Gastrocnemius medialis (tissue), 4 donors: ENCODE measurements at regions of chr1 and their contacts with region 1.

Region 1: GRCh38 chr1:167936068-167936929 is at the start of gene DCAF6:
- DNase-seq: peak; percentile 96 to 98
- ATAC-seq: peak; percentile 85
- H3K4me3 ChIP-seq: peak within 1 kb of the TSS; percentile 76 to 94 (median 90)
- H3K27ac ChIP-seq: peak within 1 kb of the TSS; percentile 94 to 99 (median 98)
- H3K4me1 ChIP-seq: peaks cover 51 to 52% of the 10 kb centered on the region in 2 donors
- H3K27me3 ChIP-seq: no peaks in the 10 kb centered on the region
- CTCF ChIP-seq: no peak
- POLR2A ChIP-seq: peak; percentile 86 to 87
- total RNA-seq, gene DCAF6: 365 to 466 (median 389) TPM

Region 2: DNA sequence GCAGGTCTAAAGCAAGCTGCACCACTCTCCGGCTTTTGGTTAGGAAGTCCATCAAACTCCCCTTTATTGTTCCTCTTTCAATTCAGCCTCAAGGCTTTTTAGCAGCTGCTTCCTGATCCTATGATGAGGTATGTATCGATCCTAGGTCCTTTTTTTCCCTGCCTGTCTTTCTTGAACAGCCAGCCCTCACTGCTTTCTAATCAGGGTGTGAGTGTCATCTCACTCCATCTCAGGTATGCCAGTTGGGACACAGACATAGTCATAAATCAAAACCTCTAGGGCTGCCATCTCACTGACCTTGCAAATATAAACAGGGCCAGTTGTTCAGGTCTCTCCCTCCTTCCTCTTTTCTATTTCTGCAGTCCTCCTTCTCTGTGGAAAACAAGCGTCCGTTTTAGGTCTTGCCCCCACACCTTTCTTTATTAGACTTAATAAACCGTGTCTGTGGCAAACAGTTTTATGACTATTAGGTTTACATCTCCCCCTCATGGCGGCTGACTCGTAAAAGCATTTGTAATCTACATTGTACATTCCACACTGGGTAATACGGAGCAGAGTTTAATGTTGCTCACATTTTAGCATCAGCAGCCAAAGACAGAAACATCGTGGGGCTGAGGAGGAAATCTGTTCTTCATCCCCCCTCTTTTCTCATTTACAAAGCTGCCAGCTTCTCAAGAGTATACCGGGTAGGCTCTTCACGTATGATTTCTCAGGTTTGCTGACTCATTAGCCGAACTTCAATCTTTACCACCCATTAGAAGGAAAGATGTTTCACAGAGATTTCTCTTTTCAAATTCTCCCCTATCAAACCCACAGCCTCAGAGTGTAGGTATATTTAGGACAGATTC is 830.8 kb before region 1 on chr1:
- in situ Hi-C with region 1: no loop called
- intact Hi-C with region 1: loop called (anchors 10 kb)
- DNase-seq: peak; percentile 42 to 65
- ATAC-seq: peak; percentile 91
- H3K4me3 ChIP-seq: peak overlapping the region in 3 of 4 donors; percentile 10 to 31 (median 22)
- H3K27ac ChIP-seq: peak overlapping the region; percentile 85 to 94 (median 89)
- H3K4me1 ChIP-seq: peaks cover 71 to 72% of the 10 kb centered on the region in 2 donors
- H3K27me3 ChIP-seq: no peaks in the 10 kb centered on the region
- CTCF ChIP-seq: no peak
- POLR2A ChIP-seq: peak in 1 of 2 donors; percentile 31

Region 3: GRCh38 chr1:167553136-167554027 is 382.9 kb before region 1 on chr1 and contains the start of gene CREG1:
- in situ Hi-C with region 1: no loop called
- intact Hi-C with region 1: loop called (anchors 10 kb)
- DNase-seq: peak; percentile 90 to 94
- ATAC-seq: peak; percentile 88 to 91
- H3K4me3 ChIP-seq: peak within 1 kb of the TSS; percentile 66 to 89 (median 74)
- H3K27ac ChIP-seq: peak within 1 kb of the TSS; percentile 66 to 91 (median 82)
- H3K4me1 ChIP-seq: peaks cover 35 to 49% of the 10 kb centered on the region in 2 donors
- H3K27me3 ChIP-seq: no peaks in the 10 kb centered on the region
- CTCF ChIP-seq: peak in 1 of 5 experiments; percentile 14
- POLR2A ChIP-seq: peak; percentile 95 to 96
- total RNA-seq, gene CREG1: 69.9 to 99.6 (median 80.7) TPM

Region 4: DNA sequence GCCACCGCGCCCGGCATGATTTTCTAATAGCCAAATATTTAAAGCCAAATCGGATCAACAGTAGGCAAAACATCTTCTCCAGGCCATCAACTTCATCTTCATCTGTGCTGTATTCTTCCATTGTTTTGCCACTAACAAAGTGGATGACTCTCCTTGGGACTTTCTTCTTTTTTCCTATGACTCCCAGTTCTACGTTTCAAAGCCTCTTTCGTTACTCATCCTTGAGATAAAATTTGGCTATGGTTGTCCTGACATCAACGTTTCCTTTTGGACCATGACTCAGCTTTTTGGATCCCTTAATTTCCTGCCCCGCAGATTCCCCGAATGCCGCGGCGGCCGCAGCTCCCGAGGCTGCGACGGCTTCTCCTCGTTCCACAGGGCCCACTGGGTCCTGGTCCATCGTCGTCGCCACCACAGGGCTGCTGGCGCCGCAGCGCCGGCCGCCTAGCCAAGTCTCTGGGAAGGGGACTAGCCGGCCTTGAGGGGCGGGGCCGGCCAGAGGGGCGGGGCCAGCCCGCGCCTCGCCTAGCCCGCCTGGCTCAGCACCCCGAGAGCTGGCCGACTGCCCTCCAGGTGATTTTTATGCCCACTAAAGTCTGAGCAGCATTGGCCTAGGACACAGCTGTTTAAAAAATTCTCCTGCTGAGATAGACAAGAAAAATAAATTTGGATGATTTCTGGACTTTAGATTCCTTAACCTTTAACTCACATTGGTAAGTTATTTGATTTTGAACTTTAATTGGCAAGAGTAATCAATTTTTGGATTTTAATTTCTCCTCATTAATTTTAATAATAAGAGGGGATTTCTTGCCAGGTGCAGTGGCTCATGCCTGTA is 116.2 kb before region 1 on chr1:
- in situ Hi-C with region 1: no loop called
- intact Hi-C with region 1: loop called (anchors 5 kb)
- DNase-seq: peak; percentile 45 to 85
- ATAC-seq: peak; percentile 92 to 93
- H3K4me3 ChIP-seq: peak overlapping the region; percentile 43 to 59 (median 47)
- H3K27ac ChIP-seq: peak overlapping the region; percentile 64 to 82 (median 76)
- H3K4me1 ChIP-seq: peaks cover 0 to 9% of the 10 kb centered on the region in 2 donors
- H3K27me3 ChIP-seq: no peaks in the 10 kb centered on the region
- CTCF ChIP-seq: no peak
- POLR2A ChIP-seq: no peak

Region 5: GRCh38 chr1:167909631-167910180 is 26.6 kb before region 1 on chr1:
- in situ Hi-C with region 1: no loop called
- intact Hi-C with region 1: no loop called
- DNase-seq: no peak
- ATAC-seq: no peak
- H3K4me3 ChIP-seq: no peak overlapping the region
- H3K27ac ChIP-seq: no peak overlapping the region
- H3K4me1 ChIP-seq: peaks cover 0 to 3% of the 10 kb centered on the region in 2 donors
- H3K27me3 ChIP-seq: no peaks in the 10 kb centered on the region
- CTCF ChIP-seq: no peak
- POLR2A ChIP-seq: no peak

Region 6: DNA sequence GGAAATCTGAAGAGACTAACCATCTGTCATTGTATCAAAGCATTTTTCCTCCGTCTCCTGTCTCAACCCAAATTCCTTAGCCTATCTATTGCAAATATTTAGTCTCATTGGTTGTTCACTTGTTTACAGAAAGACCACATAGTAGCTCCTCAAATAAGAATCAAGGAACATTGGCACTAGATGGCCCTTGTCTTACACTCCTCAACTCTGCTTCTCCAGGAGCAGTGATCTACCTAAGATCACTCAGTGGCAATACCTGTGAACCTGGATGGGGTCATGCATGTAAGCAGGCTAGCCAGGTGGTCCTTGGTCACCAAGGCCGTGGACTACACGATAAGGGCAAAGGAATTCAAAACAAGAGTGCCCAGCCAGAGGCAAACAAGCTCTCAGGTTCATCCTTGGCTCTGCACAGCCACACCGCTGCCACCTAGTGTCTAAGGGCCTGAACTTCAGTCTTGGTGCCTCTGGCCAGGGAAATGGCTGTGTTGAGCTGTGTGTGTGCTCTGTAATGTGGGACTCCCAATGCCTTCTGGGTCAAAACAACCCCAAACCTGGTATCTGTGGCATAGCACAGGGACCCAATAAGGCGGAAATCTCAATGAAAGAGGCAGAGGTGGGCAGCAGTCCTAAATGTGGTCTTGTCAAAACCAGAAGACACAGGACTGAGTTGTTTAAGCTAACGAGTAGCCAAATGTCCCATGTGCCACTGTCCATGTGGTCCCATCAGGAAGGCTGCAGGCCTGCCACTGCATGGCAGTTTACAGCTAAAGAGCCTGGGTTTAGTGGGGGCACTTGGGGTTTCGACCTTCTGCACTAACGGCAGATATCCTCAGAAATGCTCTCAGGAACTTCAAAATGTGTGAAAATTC is 145.9 kb after region 1 on chr1:
- in situ Hi-C with region 1: no loop called
- intact Hi-C with region 1: loop called (anchors 2 kb)
- DNase-seq: peak; percentile 55 to 69
- ATAC-seq: peak; percentile 64 to 80
- H3K4me3 ChIP-seq: no peak overlapping the region
- H3K27ac ChIP-seq: peak overlapping the region; percentile 51 to 70 (median 60)
- H3K4me1 ChIP-seq: peaks cover 17 to 19% of the 10 kb centered on the region in 2 donors
- H3K27me3 ChIP-seq: no peaks in the 10 kb centered on the region
- CTCF ChIP-seq: peak; percentile 72 to 89 (median 83)
- POLR2A ChIP-seq: no peak

Region 7: GRCh38 chr1:169106095-169106920 is 1170.0 kb after region 1 on chr1 and contains the start of gene ATP1B1:
- in situ Hi-C with region 1: loop called in 1 of 4 experiments (anchors 25 kb)
- intact Hi-C with region 1: no loop called
- DNase-seq: peak; percentile 82 to 89
- ATAC-seq: peak; percentile 57 to 64
- H3K4me3 ChIP-seq: peak within 1 kb of the TSS; percentile 65 to 94 (median 77)
- H3K27ac ChIP-seq: peak within 1 kb of the TSS; percentile 93 to 99 (median 96)
- H3K4me1 ChIP-seq: peaks cover 18 to 25% of the 10 kb centered on the region in 2 donors
- H3K27me3 ChIP-seq: no peaks in the 10 kb centered on the region
- CTCF ChIP-seq: peak; percentile 52 to 94 (median 83)
- POLR2A ChIP-seq: peak; percentile 97 to 99
- total RNA-seq, gene ATP1B1: 111 to 377 (median 324) TPM